A673 (cell line): ENCODE measurements at regions of chr20 and their contacts with region 1.

Region 1: GRCh38 chr20:46132705-46133120 is 14.6 kb downstream of the CD40 start:
- DNase-seq: peak; percentile 75
- H3K4me3 ChIP-seq: no peak overlapping the region
- H3K27ac ChIP-seq: no peak overlapping the region
- H3K4me1 ChIP-seq: no peaks in the 10 kb centered on the region
- H3K27me3 ChIP-seq: peaks cover 7% of the 10 kb centered on the region
- CTCF ChIP-seq: peak; percentile 92

Region 2: GRCh38 chr20:44460795-44461141 is 1671.9 kb before region 1 on chr20:
- CTCF ChIA-PET with region 1: no interaction called
- POLR2A ChIA-PET with region 1: no interaction called
- intact Hi-C with region 1: no loop called
- DNase-seq: peak; percentile 45
- H3K4me3 ChIP-seq: no peak overlapping the region
- H3K27ac ChIP-seq: no peak overlapping the region
- H3K4me1 ChIP-seq: no peaks in the 10 kb centered on the region
- H3K27me3 ChIP-seq: no peaks in the 10 kb centered on the region
- CTCF ChIP-seq: peak; percentile 62

Region 3: GRCh38 chr20:46174469-46175128 is 41.9 kb after region 1 on chr20:
- CTCF ChIA-PET with region 1: interaction called, 3 read pairs
- POLR2A ChIA-PET with region 1: no interaction called
- intact Hi-C with region 1: loop called (anchors 1 kb)
- DNase-seq: peak; percentile 76
- H3K4me3 ChIP-seq: no peak overlapping the region
- H3K27ac ChIP-seq: no peak overlapping the region
- H3K4me1 ChIP-seq: no peaks in the 10 kb centered on the region
- H3K27me3 ChIP-seq: peaks cover 36% of the 10 kb centered on the region
- CTCF ChIP-seq: peak; percentile 59

Region 4: GRCh38 chr20:46243707-46244628 is 111.3 kb after region 1 on chr20:
- CTCF ChIA-PET with region 1: no interaction called
- POLR2A ChIA-PET with region 1: no interaction called
- intact Hi-C with region 1: loop called (anchors 10 kb)
- DNase-seq: peak; percentile 58
- H3K4me3 ChIP-seq: no peak overlapping the region
- H3K27ac ChIP-seq: no peak overlapping the region
- H3K4me1 ChIP-seq: no peaks in the 10 kb centered on the region
- H3K27me3 ChIP-seq: peaks cover 60% of the 10 kb centered on the region
- CTCF ChIP-seq: no peak

Region 5: DNA sequence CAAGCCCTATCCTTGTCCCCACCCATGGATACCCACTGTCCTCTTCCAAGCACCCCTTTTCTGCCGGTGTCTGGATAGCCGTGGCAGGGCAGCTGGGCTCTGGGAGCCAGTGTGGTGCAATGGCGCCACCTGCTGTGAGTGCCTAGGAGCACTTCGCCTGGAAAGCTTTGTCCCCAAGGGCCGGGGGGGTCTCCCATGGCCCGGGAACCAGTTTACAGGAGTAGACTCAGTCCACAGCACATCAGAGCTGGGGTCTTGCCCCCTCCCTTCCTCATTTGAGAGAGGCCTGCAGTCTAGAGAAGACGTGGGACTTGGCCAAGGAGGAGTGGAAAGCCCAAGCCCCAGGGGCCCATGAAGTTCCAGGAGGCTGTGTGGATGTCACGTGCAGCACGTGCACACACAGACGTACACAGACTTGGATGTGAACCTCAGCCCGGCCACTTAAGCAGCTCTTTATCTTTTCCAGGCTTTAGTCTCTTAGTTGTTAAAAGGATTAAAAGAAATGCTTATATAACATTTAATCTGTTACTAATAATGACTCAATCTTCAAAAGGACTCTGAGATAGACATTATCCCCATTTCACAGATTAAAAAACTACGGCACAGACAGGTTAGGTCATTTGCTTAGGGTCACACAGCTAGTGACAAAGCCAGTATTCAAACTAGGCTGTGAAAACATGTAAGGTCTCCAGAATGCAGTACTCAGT is 216.5 kb after region 1 on chr20:
- CTCF ChIA-PET with region 1: interaction called, 8 read pairs
- POLR2A ChIA-PET with region 1: no interaction called
- intact Hi-C with region 1: loop called (anchors 2 kb)
- DNase-seq: peak; percentile 68
- H3K4me3 ChIP-seq: no peak overlapping the region
- H3K27ac ChIP-seq: no peak overlapping the region
- H3K4me1 ChIP-seq: peaks cover 19% of the 10 kb centered on the region
- H3K27me3 ChIP-seq: no peaks in the 10 kb centered on the region
- CTCF ChIP-seq: peak; percentile 84

Region 6: GRCh38 chr20:46568570-46569129 is 435.9 kb after region 1 on chr20:
- CTCF ChIA-PET with region 1: no interaction called
- POLR2A ChIA-PET with region 1: no interaction called
- intact Hi-C with region 1: no loop called
- DNase-seq: peak; percentile 78
- H3K4me3 ChIP-seq: no peak overlapping the region
- H3K27ac ChIP-seq: no peak overlapping the region
- H3K4me1 ChIP-seq: no peaks in the 10 kb centered on the region
- H3K27me3 ChIP-seq: no peaks in the 10 kb centered on the region
- CTCF ChIP-seq: no peak

Region 7: DNA sequence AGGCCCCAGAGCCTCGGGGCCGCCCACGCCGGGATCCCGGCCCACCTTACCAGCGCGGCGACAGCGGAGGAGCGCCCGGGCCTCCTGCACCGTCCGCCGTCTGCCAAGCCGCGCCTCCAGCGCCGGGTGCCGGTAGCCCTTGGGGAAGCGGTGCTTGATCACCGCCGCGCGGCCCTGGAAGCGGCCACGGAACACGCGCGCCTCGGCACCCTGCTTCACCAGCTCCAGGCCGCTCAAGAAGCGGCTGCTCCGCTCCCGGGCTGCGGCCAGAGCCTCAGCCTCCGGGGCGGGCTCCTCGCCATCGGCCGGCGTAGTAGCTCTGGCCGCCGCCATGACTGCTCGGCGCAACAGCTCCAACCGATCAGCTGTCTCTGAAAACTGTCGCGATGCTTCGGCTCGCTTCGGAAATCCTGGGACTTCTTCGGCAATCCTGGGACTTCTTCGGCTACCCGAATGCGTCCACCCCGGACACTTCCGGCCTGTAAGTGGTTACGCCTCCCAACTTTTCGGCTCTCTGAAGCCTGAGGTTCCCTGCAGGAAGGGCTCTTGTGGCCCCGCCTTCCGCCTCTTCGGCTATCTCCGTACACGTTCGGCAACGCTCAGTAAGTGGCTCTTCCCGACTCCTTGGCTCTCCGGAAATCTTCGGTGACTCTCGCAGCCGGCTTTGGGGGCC is 556.5 kb after region 1 on chr20 and contains the start of gene TP53RK:
- CTCF ChIA-PET with region 1: no interaction called
- POLR2A ChIA-PET with region 1: no interaction called
- intact Hi-C with region 1: loop called (anchors 10 kb)
- DNase-seq: peak; percentile 100
- H3K4me3 ChIP-seq: peak within 1 kb of the TSS; percentile 84
- H3K27ac ChIP-seq: peak within 1 kb of the TSS; percentile 96
- H3K4me1 ChIP-seq: peaks cover under 1% of the 10 kb centered on the region
- H3K27me3 ChIP-seq: no peaks in the 10 kb centered on the region
- CTCF ChIP-seq: no peak; the same call in 1 of the 2 replicates
- total RNA-seq, gene TP53RK: 16.4 and 20.6 TPM in 2 replicates